SK-N-SH (cell line): ENCODE measurements at regions of chr17 and their contacts with region 1.

Region 1: GRCh38 chr17:67891581-67892054 is 66.3 kb downstream of the BPTF start:
- DNase-seq: peak; percentile 67
- H3K4me3 ChIP-seq: no peak overlapping the region
- H3K27ac ChIP-seq: peak overlapping the region; percentile 39 to 40
- H3K4me1 ChIP-seq: peaks cover 7 to 13% of the 10 kb centered on the region in 2 experiments; a peak in 3 of 4 replicates
- H3K27me3 ChIP-seq: no peaks in the 10 kb centered on the region
- CTCF ChIP-seq: peak; percentile 70
- EP300 ChIP-seq: no peak
- RAD21 ChIP-seq: peak; percentile 67

Region 2: DNA sequence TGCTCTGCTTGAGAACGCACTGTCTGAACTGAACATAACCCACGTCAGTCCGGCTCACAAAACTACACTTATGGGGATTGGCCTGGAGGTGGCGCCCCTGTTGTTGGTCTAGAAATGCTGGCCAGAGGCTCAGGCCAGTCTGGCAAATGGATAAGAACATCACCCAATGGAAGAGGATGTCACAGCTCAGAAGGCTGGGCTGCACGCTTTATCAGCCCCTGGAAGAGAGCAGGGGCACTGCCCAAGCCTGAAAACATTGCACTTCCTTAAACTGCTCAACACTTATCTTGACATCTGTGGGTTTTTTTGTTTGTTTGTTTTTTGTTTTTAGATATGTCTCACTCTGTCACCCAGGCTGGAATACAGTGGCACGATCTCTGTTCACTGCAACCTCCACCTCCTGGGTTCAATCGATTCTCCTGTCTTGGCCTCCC is 91.1 kb before region 1 on chr17:
- CTCF ChIA-PET with region 1: interaction called, 10 read pairs
- POLR2A ChIA-PET with region 1: no interaction called
- DNase-seq: peak; percentile 85
- H3K4me3 ChIP-seq: no peak overlapping the region
- H3K27ac ChIP-seq: no peak overlapping the region
- H3K4me1 ChIP-seq: no peaks in the 10 kb centered on the region
- H3K27me3 ChIP-seq: no peaks in the 10 kb centered on the region
- CTCF ChIP-seq: peak; percentile 88
- EP300 ChIP-seq: no peak
- RAD21 ChIP-seq: peak; percentile 95

Region 3: DNA sequence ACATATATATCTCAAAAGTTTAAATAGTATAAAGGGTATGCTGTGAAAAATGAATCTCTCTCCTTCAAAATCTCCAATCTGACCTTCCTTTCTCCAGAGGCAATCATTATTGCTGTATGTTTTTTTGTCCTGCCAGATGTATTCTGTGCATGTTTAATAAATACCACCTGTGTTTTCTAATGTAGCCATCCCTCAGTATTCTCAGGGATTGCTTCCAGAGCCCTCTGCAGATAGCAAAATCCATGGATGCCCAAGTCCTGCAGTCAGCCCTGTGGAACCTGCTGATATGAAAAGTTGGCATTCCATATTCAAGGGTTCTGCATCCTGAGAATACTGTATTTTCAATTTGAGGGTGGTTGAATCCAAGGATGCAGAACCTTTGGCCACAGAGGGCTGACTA is 23.4 kb before region 1 on chr17:
- CTCF ChIA-PET with region 1: interaction called, 11 read pairs
- POLR2A ChIA-PET with region 1: no interaction called
- DNase-seq: peak; percentile 76
- H3K4me3 ChIP-seq: no peak overlapping the region
- H3K27ac ChIP-seq: peak overlapping the region in 1 of 2 experiments; percentile 75; a peak in 2 of 4 replicates
- H3K4me1 ChIP-seq: peaks cover 0 to 11% of the 10 kb centered on the region in 2 experiments; a peak in 2 of 4 replicates
- H3K27me3 ChIP-seq: no peaks in the 10 kb centered on the region
- CTCF ChIP-seq: no peak
- EP300 ChIP-seq: peak in 1 of 2 experiments; percentile 56; a peak in 1 of 4 replicates
- RAD21 ChIP-seq: no peak; the same call in 1 of the 2 replicates

Region 4: DNA sequence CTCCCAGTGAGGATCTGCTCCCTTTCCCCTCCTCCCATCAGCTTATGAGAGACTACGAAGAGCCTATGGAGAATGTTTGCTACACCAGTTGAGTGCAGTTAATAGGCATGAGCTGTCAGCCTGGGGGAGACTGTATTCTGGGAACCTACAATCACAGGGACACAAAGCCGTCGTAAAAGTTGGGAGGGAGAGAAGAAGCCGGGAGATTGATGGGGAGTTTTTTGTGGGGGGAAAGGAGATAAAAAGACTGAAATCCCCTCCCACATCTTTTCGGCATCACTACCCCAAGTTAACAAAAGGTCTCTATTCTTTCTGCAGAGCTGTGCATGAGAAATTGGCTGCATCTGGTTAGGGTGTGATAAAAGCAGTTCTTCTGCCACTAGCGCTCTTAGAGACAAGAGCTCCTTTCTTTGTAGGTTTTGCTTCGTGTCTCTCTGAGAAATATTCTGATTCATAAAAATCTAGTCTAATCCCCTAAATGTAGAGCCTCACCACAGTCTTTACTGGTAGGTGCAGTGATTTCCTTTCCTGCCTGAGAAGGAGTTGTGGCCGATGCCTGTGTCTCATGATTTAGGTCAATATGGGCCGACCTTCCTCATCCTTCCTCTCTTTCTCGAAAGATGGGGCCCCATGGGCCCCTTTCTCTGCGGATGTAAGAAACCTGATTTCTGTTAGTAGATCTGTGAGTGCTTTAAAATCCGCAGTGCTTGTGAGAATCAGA is 11.1 kb after region 1 on chr17:
- CTCF ChIA-PET with region 1: interaction called, 29 read pairs
- POLR2A ChIA-PET with region 1: no interaction called
- DNase-seq: no peak
- H3K4me3 ChIP-seq: no peak overlapping the region
- H3K27ac ChIP-seq: no peak overlapping the region
- H3K4me1 ChIP-seq: no peaks in the 10 kb centered on the region
- H3K27me3 ChIP-seq: no peaks in the 10 kb centered on the region
- CTCF ChIP-seq: no peak
- EP300 ChIP-seq: no peak
- RAD21 ChIP-seq: no peak

Region 5: DNA sequence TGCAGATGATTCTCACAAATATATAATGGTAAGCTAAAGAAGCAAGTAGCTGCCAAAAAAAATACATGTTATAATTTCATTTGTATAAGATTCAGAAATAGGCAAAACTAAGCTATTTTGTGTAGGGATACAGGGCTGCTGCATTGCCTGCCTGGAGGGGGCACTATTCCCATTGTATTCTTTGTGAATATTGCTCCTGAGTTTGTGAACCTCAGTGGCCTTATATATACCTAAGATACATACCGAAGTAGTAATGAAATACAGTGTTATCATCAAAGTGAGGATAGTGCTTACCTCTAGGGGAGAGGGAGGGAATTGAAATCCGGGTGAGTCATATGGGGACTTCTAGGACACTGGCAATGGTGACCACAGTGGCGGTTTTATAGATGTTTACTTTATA is 51.2 kb after region 1 on chr17:
- CTCF ChIA-PET with region 1: interaction called, 20 read pairs
- POLR2A ChIA-PET with region 1: no interaction called
- DNase-seq: peak; percentile 22
- H3K4me3 ChIP-seq: no peak overlapping the region
- H3K27ac ChIP-seq: no peak overlapping the region
- H3K4me1 ChIP-seq: no peaks in the 10 kb centered on the region
- H3K27me3 ChIP-seq: no peaks in the 10 kb centered on the region
- CTCF ChIP-seq: peak; percentile 72
- EP300 ChIP-seq: no peak
- RAD21 ChIP-seq: peak; percentile 30

Region 6: GRCh38 chr17:68314916-68315535 is 423.4 kb after region 1 on chr17:
- CTCF ChIA-PET with region 1: no interaction called
- POLR2A ChIA-PET with region 1: no interaction called
- DNase-seq: no peak
- H3K4me3 ChIP-seq: no peak overlapping the region
- H3K27ac ChIP-seq: no peak overlapping the region
- H3K4me1 ChIP-seq: no peaks in the 10 kb centered on the region
- H3K27me3 ChIP-seq: no peaks in the 10 kb centered on the region; the same call in 1 of the 2 replicates
- CTCF ChIP-seq: no peak
- EP300 ChIP-seq: no peak
- RAD21 ChIP-seq: no peak

Region 7: DNA sequence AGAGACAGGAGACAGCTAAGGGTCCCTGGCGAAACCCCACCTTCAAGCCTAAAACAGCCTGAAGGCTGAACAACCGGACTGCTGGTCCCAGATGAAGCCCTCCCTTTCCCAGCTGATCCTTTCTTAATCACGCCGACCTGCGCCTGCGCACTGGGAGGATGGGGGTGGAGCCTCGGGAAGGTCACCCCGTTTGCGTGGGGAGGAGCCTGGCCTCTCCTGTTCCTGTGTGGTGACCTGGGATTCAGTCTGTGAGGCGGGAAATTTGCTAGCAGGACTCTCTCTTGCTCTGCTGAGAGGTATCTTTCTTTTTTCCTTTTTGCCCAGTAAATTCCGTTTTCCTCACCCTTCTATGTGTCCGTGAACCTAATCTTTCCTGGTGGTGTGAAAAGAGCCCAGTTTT is 700.0 kb after region 1 on chr17:
- CTCF ChIA-PET with region 1: no interaction called
- POLR2A ChIA-PET with region 1: no interaction called
- DNase-seq: no peak
- H3K4me3 ChIP-seq: no peak overlapping the region
- H3K27ac ChIP-seq: no peak overlapping the region
- H3K4me1 ChIP-seq: peaks cover 0 to 5% of the 10 kb centered on the region in 2 experiments; a peak in 1 of 4 replicates
- H3K27me3 ChIP-seq: no peaks in the 10 kb centered on the region; the same call in 1 of the 2 replicates
- CTCF ChIP-seq: no peak
- EP300 ChIP-seq: no peak
- RAD21 ChIP-seq: no peak